Adrenal gland (tissue), 19 donors: ENCODE measurements at regions of chr2 and their contacts with region 1.

Region 1: GRCh38 chr2:1525747-1526146 is 112.5 kb downstream of the TPO start:
- DNase-seq: no peak
- H3K4me3 ChIP-seq: no peak overlapping the region
- H3K27ac ChIP-seq: no peak overlapping the region
- H3K4me1 ChIP-seq: no peaks in the 10 kb centered on the region
- H3K27me3 ChIP-seq: no peaks in the 10 kb centered on the region
- CTCF ChIP-seq: no peak
- POLR2A ChIP-seq: no peak

Region 2: GRCh38 chr2:1538663-1539062 is 12.9 kb after region 1 on chr2:
- intact Hi-C with region 1: loop called in 1 of 2 experiments (anchors 1 kb)
- DNase-seq: no peak
- H3K4me3 ChIP-seq: no peak overlapping the region
- H3K27ac ChIP-seq: no peak overlapping the region
- H3K4me1 ChIP-seq: no peaks in the 10 kb centered on the region
- H3K27me3 ChIP-seq: no peaks in the 10 kb centered on the region
- CTCF ChIP-seq: peak in 1 of 6 experiments; percentile 8
- POLR2A ChIP-seq: no peak

Region 3: DNA sequence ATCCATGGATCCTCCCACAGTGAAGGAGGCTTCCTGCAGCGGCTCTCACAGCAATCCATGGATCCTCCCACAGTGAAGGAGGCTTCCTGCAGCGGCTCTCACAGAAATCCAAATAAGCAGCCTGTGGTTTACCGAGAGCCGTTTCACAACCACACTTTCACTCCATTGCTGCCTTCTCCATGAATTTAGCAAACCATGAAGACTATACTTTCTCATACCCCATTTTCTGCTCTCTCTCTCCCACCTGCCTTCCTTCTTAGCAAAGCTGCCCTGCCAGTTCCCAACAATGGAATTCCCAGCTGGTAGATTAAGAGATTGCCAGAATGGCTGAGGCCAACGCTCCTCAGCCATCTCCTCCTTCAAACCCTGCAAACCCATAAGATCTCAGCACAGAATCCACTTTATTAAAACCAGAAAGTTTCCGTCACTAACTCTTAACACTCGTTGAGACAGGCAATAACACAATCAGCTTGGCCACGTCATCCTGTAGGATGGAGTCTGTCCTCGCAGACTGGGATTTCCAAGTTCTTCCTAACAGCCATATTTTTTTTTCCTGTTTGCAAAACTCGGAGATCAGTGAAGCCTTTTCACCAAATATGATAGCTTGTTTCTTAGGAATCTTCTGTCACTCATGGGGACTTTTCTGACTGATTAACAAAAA is 56.3 kb after region 1 on chr2:
- intact Hi-C with region 1: no loop called
- DNase-seq: no peak
- H3K4me3 ChIP-seq: no peak overlapping the region
- H3K27ac ChIP-seq: no peak overlapping the region
- H3K4me1 ChIP-seq: no peaks in the 10 kb centered on the region
- H3K27me3 ChIP-seq: no peaks in the 10 kb centered on the region
- CTCF ChIP-seq: no peak
- POLR2A ChIP-seq: no peak